MCF 10A (cell line): ENCODE measurements at regions of chr14 and their contacts with region 1.

Region 1: DNA sequence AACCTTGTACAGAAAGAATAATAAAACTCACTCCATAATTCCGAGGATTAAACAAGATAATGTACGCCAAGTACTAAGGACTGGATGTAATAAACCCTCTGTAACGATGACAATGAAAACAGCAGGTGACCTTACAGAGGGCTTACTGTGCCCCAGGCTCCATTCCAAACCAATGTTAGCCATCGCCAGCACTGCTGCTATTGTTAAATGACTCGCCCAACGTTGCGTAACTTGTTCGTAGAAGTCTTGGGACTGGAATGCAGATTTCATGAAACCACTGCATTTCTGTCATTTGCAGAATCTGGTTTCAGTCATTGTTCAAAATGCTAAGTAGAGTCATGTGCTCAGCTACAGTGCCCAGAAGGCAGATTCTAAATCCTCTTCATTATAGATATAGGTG is 728 bp upstream of the STON2 start:
- DNase-seq: peak; percentile 99
- H3K4me3 Mint-ChIP-seq: peak overlapping the region; percentile 35
- H3K27ac Mint-ChIP-seq: peak overlapping the region; percentile 99
- H3K4me1 Mint-ChIP-seq: peaks cover 37% of the 10 kb centered on the region
- H3K27me3 Mint-ChIP-seq: no peaks in the 10 kb centered on the region
- CTCF ChIP-seq: no peak

Region 2: DNA sequence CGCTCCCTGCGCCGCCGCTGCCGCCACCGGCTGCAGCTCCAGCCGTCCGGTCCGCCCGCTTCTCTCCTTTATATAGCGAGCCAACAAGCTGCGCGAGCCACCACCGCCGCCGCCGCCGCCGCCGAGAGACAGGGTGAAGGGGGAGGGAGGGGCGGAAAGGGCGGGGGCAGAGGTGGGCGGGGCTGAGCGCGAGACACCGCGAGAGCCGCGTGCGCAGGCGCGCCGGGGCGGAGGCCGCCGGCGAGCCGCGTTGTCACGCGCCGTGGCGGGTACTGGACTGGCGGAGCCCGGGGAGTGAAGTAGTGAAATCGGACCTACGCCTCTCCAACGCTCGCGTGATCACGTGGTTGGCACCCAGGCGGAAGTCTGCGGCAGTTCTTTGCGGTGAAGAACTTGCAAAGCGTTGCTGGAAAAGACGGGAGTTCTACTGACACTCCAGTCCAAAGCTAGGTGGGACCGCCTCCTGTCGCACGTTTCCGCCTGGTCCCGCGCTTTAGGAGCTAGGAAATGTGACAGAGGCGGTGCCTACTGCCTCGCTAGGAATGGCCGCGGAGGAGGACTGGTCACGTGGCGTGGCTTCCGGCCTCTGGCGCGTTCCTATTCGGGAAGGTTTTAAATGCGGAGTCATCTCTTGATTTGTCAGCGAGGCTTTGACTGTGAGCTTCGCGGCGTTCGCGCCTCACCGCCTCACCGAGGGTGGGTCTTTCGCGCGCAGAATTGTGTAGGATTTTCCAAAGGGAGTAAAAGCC is 179.8 kb before region 1 on chr14 and contains the start of gene GTF2A1:
- CTCF ChIA-PET with region 1: no interaction called
- POLR2A ChIA-PET with region 1: interaction called, 15 read pairs
- intact Hi-C with region 1: loop called (anchors 1 kb)
- DNase-seq: peak; percentile 94
- H3K4me3 Mint-ChIP-seq: peak within 1 kb of the TSS; percentile 93
- H3K27ac Mint-ChIP-seq: peak within 1 kb of the TSS; percentile 99
- H3K4me1 Mint-ChIP-seq: peaks cover 6% of the 10 kb centered on the region
- H3K27me3 Mint-ChIP-seq: no peaks in the 10 kb centered on the region
- CTCF ChIP-seq: no peak
- total RNA-seq, gene GTF2A1: 35.0 and 49.4 TPM in 2 replicates

Region 3: GRCh38 chr14:81315341-81315740 is 85.5 kb before region 1 on chr14:
- CTCF ChIA-PET with region 1: no interaction called
- POLR2A ChIA-PET with region 1: interaction called, 37 read pairs
- intact Hi-C with region 1: no loop called
- DNase-seq: no peak
- H3K4me3 Mint-ChIP-seq: no peak overlapping the region
- H3K27ac Mint-ChIP-seq: peak overlapping the region; percentile 31
- H3K4me1 Mint-ChIP-seq: peaks cover 33% of the 10 kb centered on the region
- H3K27me3 Mint-ChIP-seq: no peaks in the 10 kb centered on the region
- CTCF ChIP-seq: no peak

Region 4: DNA sequence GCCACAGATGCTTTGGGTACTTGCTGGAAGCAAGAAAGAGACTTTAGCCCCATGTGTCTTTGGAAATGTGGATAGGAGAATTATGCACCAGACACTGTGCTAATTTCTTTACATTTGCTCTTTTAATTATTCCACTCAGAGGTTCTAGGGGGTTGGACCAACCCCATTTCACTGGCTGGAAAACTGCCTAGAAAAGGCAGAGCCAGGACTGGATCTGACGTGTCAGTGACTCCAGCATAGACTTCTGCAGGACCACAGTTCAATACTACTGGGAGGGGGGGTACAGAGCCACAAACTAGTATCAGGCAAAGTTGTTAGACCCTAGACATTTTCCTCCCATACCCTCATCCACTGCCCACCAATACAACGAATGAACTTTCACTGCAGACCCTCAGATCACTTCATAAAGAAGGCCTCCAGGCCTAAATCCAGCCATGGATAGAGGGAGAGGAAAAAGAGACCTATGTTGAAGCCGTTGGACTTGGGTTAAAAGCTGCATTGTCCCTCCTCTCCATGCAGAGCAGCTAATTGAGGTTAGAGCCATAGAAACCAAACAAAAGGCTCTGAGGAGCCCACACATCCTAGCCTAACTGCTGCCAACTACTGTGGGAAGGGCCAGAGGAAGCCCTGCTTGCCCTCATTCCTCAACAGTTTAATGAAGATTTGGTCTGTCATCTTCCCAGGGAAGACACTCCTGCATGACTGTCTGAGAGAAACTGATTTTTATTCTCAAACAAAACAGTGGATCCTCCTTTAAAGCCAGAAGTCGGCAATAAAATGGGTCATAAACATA is 69.4 kb before region 1 on chr14:
- CTCF ChIA-PET with region 1: interaction called, 4 read pairs
- POLR2A ChIA-PET with region 1: interaction called, 32 read pairs
- intact Hi-C with region 1: no loop called
- DNase-seq: peak; percentile 24
- H3K4me3 Mint-ChIP-seq: no peak overlapping the region
- H3K27ac Mint-ChIP-seq: peak overlapping the region; percentile 84
- H3K4me1 Mint-ChIP-seq: peaks cover 23% of the 10 kb centered on the region
- H3K27me3 Mint-ChIP-seq: no peaks in the 10 kb centered on the region
- CTCF ChIP-seq: no peak

Region 5: GRCh38 chr14:81384900-81385299 is 16.0 kb before region 1 on chr14:
- CTCF ChIA-PET with region 1: interaction called, 11 read pairs
- POLR2A ChIA-PET with region 1: interaction called, 20 read pairs
- intact Hi-C with region 1: no loop called
- DNase-seq: peak; percentile 66
- H3K4me3 Mint-ChIP-seq: no peak overlapping the region
- H3K27ac Mint-ChIP-seq: no peak overlapping the region
- H3K4me1 Mint-ChIP-seq: peaks cover 13% of the 10 kb centered on the region
- H3K27me3 Mint-ChIP-seq: no peaks in the 10 kb centered on the region
- CTCF ChIP-seq: no peak

Region 6: GRCh38 chr14:81436296-81437138 is 35.7 kb after region 1 on chr14:
- CTCF ChIA-PET with region 1: interaction called, 4 read pairs
- POLR2A ChIA-PET with region 1: interaction called, 78 read pairs
- intact Hi-C with region 1: loop called (anchors 1 kb)
- DNase-seq: peak; percentile 81
- H3K4me3 Mint-ChIP-seq: peak overlapping the region; percentile 70
- H3K27ac Mint-ChIP-seq: no peak overlapping the region
- H3K4me1 Mint-ChIP-seq: peaks cover 10% of the 10 kb centered on the region
- H3K27me3 Mint-ChIP-seq: no peaks in the 10 kb centered on the region
- CTCF ChIP-seq: no peak